ENCODE measurements at regions of chr4 and their contacts with region 1.

Region 1: GRCh38 chr4:25756503-25756902 is 100.9 kb downstream of the SLC34A2 start:
- DNase-seq: no peak
- ATAC-seq: no peak
- H3K4me3 ChIP-seq: no peak overlapping the region
- H3K4me3 Mint-ChIP-seq: no peak overlapping the region
- H3K27ac ChIP-seq: no peak overlapping the region
- H3K27ac Mint-ChIP-seq: no peak overlapping the region
- H3K4me1 ChIP-seq: no peaks in the 10 kb centered on the region
- H3K4me1 Mint-ChIP-seq: no peaks in the 10 kb centered on the region
- H3K27me3 ChIP-seq: no peaks in the 10 kb centered on the region
- H3K27me3 Mint-ChIP-seq: no peaks in the 10 kb centered on the region

Region 2: GRCh38 chr4:25743971-25744370 is 12.5 kb before region 1 on chr4:
- CTCF ChIA-PET with region 1: no interaction called
- POLR2A ChIA-PET with region 1: interaction called in 1 of 2 experiments, 10 read pairs
- DNase-seq: no peak
- ATAC-seq: no peak
- H3K4me3 ChIP-seq: no peak overlapping the region
- H3K4me3 Mint-ChIP-seq: no peak overlapping the region
- H3K27ac ChIP-seq: no peak overlapping the region
- H3K27ac Mint-ChIP-seq: no peak overlapping the region
- H3K4me1 ChIP-seq: no peaks in the 10 kb centered on the region
- H3K4me1 Mint-ChIP-seq: no peaks in the 10 kb centered on the region
- H3K27me3 ChIP-seq: no peaks in the 10 kb centered on the region
- H3K27me3 Mint-ChIP-seq: no peaks in the 10 kb centered on the region